Dorsolateral prefrontal cortex (tissue), 120 donors: ENCODE measurements at regions of chr2 and their contacts with region 1.

Region 1: GRCh38 chr2:181742922-181743722 is 62.8 kb upstream of the NEUROD1 start:
- DNase-seq: peak in 3 of 10 donors; percentile 4 to 42 (median 6)
- H3K4me3 ChIP-seq: peak overlapping the region in 12 of 59 donors; percentile 0 to 42 (median 12)
- H3K27ac ChIP-seq: no peak overlapping the region
- H3K27me3 ChIP-seq: no peaks in the 10 kb centered on the region
- CTCF ChIP-seq: peak; percentile 51 to 90 (median 74)

Region 2: GRCh38 chr2:181904022-181904632 is 161.0 kb after region 1 on chr2:
- intact Hi-C with region 1: loop called in 1 of 2 experiments (anchors 5 kb)
- DNase-seq: no peak
- H3K4me3 ChIP-seq: no peak overlapping the region
- H3K27ac ChIP-seq: peak overlapping the region in 19 of 59 donors; percentile 2 to 48 (median 26)
- H3K27me3 ChIP-seq: no peaks in the 10 kb centered on the region
- CTCF ChIP-seq: peak; percentile 36 to 75 (median 54)

Region 3: DNA sequence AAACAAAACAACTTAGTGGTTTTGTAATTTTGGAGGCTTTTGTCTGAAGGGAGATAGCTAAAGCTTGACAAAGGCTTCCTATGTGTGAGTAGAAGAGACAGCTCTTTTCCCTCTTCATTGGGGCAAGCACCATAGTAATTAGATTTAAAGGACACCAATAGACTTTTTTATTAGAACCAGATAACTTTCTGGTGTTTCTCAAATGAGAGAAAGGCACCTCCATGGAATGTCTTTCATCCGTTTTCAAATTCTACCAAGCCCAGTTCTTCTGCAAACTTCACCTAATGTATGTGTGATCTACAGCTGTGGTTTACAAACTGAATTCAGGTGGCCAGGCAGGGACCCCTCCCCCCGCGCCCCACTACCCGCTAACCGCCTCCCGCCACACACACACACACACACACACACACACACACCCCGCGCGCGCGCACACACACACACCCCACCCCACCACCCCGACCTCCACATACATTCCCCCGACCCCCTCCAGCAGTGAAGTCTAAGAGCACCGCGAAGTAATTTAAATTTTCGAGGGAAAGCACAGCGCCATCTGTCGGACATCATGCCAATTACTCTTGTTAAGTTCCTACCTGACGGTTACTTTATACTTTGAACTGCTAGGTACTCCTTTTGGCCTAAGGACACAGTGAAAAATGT is 210.9 kb after region 1 on chr2:
- intact Hi-C with region 1: loop called (anchors 2 to 5 kb)
- DNase-seq: peak in 4 of 10 donors; percentile 16 to 38 (median 34)
- H3K4me3 ChIP-seq: peak overlapping the region in 19 of 59 donors; percentile 2 to 34 (median 21)
- H3K27ac ChIP-seq: no peak overlapping the region
- H3K27me3 ChIP-seq: no peaks in the 10 kb centered on the region
- CTCF ChIP-seq: peak; percentile 38 to 75 (median 59)

Region 4: DNA sequence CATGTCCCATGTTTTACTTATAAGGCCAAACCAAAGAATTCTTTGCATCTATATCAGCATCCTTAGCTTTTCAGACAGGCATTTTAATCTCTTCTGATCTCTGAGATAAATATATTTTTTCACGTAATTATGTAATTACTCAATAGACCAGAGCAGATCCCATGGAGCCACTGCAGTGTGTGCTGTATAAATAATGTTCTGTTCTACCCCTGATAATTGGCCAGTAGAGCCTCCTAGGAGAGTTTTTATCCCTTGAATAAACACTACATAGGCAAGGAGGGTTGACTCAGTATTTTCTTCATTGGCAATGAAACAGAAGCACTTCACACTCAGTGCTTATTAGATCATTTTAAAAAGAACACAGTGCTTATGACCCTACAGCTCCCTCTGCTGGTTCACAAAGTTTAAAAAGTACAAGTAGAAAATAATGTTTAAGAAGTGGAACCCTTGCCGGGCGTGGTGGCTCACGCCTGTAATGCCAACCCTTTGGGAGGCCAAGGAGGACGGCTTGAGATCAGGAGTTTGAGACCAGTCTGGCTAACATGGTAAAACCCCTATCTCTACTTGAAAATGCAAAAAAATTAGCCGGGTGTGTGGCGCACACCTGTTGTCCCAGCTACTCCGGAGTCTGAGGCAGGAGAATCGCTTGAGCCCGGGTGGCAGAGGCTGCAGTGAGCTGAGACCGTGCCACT is 334.5 kb after region 1 on chr2:
- intact Hi-C with region 1: loop called (anchors 5 kb)
- DNase-seq: peak in 2 of 10 donors; percentile 12 to 15
- H3K4me3 ChIP-seq: peak overlapping the region in 4 of 59 donors; percentile 0 to 16 (median 6)
- H3K27ac ChIP-seq: no peak overlapping the region
- H3K27me3 ChIP-seq: no peaks in the 10 kb centered on the region
- CTCF ChIP-seq: peak; percentile 61 to 92 (median 76)

Region 5: DNA sequence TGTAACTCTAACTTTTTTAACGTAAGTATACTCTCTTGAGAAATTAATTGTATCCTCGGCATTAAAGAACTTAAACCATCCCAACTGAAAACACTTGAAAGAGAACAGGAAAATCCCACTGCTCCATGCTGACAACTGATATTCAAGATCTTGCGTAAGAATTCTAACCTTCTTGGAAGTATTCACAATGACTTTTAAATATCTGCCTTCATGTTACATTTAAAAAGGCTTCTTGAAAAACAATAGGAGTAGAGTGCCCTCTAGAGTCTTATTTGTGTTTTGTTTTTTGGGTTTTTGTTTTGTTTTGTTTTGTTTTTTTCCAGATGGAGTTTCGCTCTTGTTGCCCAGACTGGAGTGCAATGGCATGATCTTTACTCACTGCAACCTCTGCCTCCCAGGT is 907.6 kb after region 1 on chr2:
- intact Hi-C with region 1: loop called in 1 of 2 experiments (anchors 10 kb)
- DNase-seq: no peak
- H3K4me3 ChIP-seq: peak overlapping the region in 12 of 59 donors; percentile 3 to 48 (median 21)
- H3K27ac ChIP-seq: peak overlapping the region in 3 of 59 donors; percentile 30 to 62 (median 43)
- H3K27me3 ChIP-seq: peaks cover 0 to 1% (median 0%) of the 10 kb centered on the region in 45 donors
- CTCF ChIP-seq: peak; percentile 49 to 88 (median 72)